ENCODE measurements at regions of chr5 and their contacts with region 1.

Region 1: GRCh38 chr5:80481019-80481893 is 6.6 kb upstream of the FAM151B start:
- DNase-seq: peak; percentile 53
- H3K4me3 Mint-ChIP-seq: no peak overlapping the region
- H3K27ac Mint-ChIP-seq: no peak overlapping the region
- H3K4me1 Mint-ChIP-seq: peaks cover 10% of the 10 kb centered on the region
- H3K27me3 Mint-ChIP-seq: peaks cover 4% of the 10 kb centered on the region

Region 2: GRCh38 chr5:80346055-80346454 is 135.2 kb before region 1 on chr5:
- CTCF ChIA-PET with region 1: no interaction called
- POLR2A ChIA-PET with region 1: no interaction called
- DNase-seq: peak; percentile 33
- H3K4me3 Mint-ChIP-seq: no peak overlapping the region
- H3K27ac Mint-ChIP-seq: no peak overlapping the region
- H3K4me1 Mint-ChIP-seq: no peaks in the 10 kb centered on the region
- H3K27me3 Mint-ChIP-seq: peaks cover 9% of the 10 kb centered on the region

Region 3: DNA sequence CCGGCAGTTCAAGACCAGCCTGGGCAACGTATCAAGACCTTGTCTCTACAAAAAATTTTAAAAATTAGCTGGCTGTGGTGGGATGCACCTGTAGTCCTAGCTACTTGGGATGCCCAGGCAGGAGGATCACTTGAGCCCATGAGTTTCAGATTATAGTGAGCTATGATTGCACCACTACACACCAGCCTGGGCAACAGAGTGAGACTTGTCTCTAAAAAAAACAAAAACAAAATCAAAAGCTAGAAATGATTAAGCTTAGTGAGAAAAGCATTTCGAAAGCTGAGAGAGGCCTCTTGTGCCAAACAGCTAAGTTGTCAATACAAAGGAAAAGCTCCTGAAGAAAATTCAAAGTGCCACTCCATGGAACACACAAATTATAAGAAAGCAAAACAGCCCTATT is 11.5 kb after region 1 on chr5:
- CTCF ChIA-PET with region 1: interaction called, 10 read pairs
- POLR2A ChIA-PET with region 1: no interaction called
- DNase-seq: no peak
- H3K4me3 Mint-ChIP-seq: no peak overlapping the region
- H3K27ac Mint-ChIP-seq: no peak overlapping the region
- H3K4me1 Mint-ChIP-seq: peaks cover 15% of the 10 kb centered on the region
- H3K27me3 Mint-ChIP-seq: peaks cover 19% of the 10 kb centered on the region

Region 4: GRCh38 chr5:80672140-80672736 is 191.0 kb after region 1 on chr5:
- CTCF ChIA-PET with region 1: interaction called, 22 read pairs
- POLR2A ChIA-PET with region 1: no interaction called
- DNase-seq: peak; percentile 76
- H3K4me3 Mint-ChIP-seq: no peak overlapping the region
- H3K27ac Mint-ChIP-seq: no peak overlapping the region
- H3K4me1 Mint-ChIP-seq: peaks cover 10% of the 10 kb centered on the region
- H3K27me3 Mint-ChIP-seq: no peaks in the 10 kb centered on the region

Measured in activated CD4-positive, alpha-beta memory T cell treated with anti-CD3 and anti-CD28 coated beads, Interleukin-2, amount 10 ng/mL, durations not matched to agents 7 days and 5 days (primary cell).